ENCODE measurements at regions of chr3 and their contacts with region 1.

Region 1: DNA sequence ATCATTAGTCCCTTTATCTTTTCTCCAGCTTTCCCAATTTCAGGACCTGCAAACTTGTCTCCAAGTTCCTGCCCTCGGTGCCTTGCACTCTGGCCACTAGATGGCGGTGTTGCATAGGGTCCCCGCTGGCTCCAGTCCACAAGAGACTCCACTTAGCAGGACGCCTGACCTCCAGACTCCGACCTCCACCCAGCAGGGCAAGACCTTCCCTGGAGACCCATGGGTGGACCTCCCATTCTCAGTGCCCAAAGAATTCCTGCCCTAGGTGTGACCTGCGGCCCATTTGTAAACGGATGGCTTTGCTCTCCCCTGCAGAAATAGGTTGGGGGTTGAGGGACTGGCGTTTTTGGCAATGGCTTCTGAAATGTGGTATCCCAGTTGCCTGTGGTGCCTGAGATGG is 82.6 kb downstream of the LSM3 start:
- DNase-seq: peak; percentile 85
- H3K4me3 ChIP-seq: no peak overlapping the region
- H3K27ac ChIP-seq: no peak overlapping the region
- H3K4me1 ChIP-seq: peaks cover 0 to 6% of the 10 kb centered on the region in 2 donors
- H3K27me3 ChIP-seq: no peaks in the 10 kb centered on the region
- CTCF ChIP-seq: peak; percentile 92 to 99 (median 94)
- POLR2A ChIP-seq: no peak

Region 2: GRCh38 chr3:13673209-13673608 is 588.0 kb before region 1 on chr3:
- intact Hi-C with region 1: loop called (anchors 5 kb)
- DNase-seq: no peak
- H3K4me3 ChIP-seq: no peak overlapping the region
- H3K27ac ChIP-seq: no peak overlapping the region
- H3K4me1 ChIP-seq: no peaks in the 10 kb centered on the region
- H3K27me3 ChIP-seq: no peaks in the 10 kb centered on the region
- CTCF ChIP-seq: no peak
- POLR2A ChIP-seq: no peak

Region 3: GRCh38 chr3:14319654-14320182 is 58.5 kb after region 1 on chr3:
- intact Hi-C with region 1: no loop called
- DNase-seq: no peak
- H3K4me3 ChIP-seq: no peak overlapping the region
- H3K27ac ChIP-seq: no peak overlapping the region
- H3K4me1 ChIP-seq: no peaks in the 10 kb centered on the region
- H3K27me3 ChIP-seq: no peaks in the 10 kb centered on the region
- CTCF ChIP-seq: no peak
- POLR2A ChIP-seq: no peak

Region 4: DNA sequence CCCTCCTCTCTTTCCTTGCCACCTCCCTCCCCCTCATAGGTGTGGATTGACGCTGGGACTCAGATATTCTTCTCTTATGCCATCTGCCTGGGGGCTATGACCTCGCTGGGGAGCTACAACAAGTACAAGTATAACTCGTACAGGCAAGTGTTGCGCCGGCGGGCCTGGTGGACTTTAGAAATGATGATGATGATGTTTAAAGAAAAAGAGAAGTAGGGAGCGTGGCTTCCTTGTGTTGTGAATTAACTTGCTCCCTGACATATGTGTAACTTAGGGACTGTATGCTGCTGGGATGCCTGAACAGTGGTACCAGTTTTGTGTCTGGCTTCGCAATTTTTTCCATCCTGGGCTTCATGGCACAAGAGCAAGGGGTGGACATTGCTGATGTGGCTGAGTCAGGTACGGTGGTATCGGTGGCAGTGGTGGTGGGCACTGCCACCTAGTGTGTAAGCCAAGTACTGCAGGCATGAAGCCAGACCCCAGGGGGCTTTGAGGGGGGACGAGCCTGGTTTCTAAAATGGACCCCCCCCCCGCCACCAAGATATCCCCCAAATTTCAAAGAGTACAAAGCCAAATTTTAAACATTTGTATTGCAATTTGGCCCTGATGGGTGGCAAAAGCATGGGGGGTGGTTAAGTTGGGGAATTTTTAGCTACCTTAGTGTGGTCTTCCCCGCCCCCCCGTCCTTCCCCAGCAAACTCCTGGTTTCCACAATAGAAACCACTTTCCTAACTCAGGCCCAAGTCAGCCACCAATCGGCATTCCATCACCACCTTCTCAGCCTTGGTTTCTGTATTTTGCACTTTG is 206.8 kb after region 1 on chr3:
- intact Hi-C with region 1: loop called (anchors 5 kb)
- DNase-seq: peak; percentile 54 to 62
- H3K4me3 ChIP-seq: no peak overlapping the region
- H3K27ac ChIP-seq: peak overlapping the region in 1 of 2 donors; percentile 43
- H3K4me1 ChIP-seq: peaks cover 4 to 7% of the 10 kb centered on the region in 2 donors
- H3K27me3 ChIP-seq: no peaks in the 10 kb centered on the region
- CTCF ChIP-seq: peak; percentile 86 to 94 (median 91)
- POLR2A ChIP-seq: no peak

Measured in uterus (tissue), 4 donors.